CD4-positive, alpha-beta memory T cell (primary cell): ENCODE measurements at regions of chr14 and their contacts with region 1.

Region 1: DNA sequence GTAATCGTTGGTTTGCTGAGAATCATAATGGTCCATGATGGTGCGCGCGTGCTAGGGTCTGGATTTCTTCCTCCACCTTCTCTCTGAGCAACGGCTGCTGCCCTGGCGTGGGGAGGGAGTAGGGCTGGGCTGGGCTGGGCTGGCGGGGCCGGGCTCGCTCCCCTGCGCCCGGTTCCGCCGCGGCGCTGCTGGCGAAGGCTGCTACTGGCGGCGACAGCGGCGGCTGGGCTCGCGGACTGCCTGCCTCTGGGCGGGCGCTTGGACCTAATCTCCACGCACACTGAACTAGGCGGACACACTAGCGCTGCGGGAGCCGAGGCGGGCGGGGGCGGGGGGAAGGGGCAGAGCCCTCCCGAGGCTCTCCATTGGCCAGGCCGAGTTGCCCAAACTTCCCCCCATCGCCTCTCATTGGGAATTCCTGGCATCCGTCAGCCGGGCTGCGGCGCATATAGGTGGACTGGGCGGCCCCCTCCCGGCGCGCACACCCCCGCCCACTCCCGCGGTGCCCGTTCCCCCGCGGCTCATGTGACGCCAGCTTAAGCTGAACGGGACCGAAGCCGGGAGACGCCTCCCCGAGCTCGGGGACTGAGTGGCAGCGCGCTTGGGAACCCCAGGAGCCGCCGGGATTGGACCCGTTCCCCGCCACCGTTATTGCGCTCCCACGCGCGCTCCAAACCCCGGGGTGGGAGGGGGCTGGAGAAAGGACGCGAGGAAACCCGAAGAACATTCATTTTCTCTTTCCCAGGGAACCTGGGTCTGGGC is at the start of gene ACTN1:
- DNase-seq: peak; percentile 46 to 66 (median 50)
- H3K4me3 ChIP-seq: peak within 1 kb of the TSS; percentile 52 to 77
- H3K4me3 Mint-ChIP-seq: peak within 1 kb of the TSS; percentile 92 to 95 (median 94)
- H3K27ac ChIP-seq: peak within 1 kb of the TSS; percentile 42
- H3K27ac Mint-ChIP-seq: peak within 1 kb of the TSS; percentile 75 to 94 (median 89)
- H3K4me1 ChIP-seq: peaks cover 27% of the 10 kb centered on the region
- H3K4me1 Mint-ChIP-seq: peaks cover 27 to 41% (median 35%) of the 10 kb centered on the region in 4 donors
- H3K27me3 ChIP-seq: no peaks in the 10 kb centered on the region
- H3K27me3 Mint-ChIP-seq: no peaks in the 10 kb centered on the region
- total RNA-seq, gene ACTN1: 70.8 to 75.1 TPM

Region 2: GRCh38 chr14:68939893-68940613 is 39.1 kb before region 1 on chr14:
- CTCF ChIA-PET with region 1: interaction called, 6 read pairs
- POLR2A ChIA-PET with region 1: interaction called, 4 read pairs
- intact Hi-C with region 1: loop called (anchors 2 kb)
- DNase-seq: no peak
- H3K4me3 ChIP-seq: no peak overlapping the region
- H3K4me3 Mint-ChIP-seq: no peak overlapping the region
- H3K27ac ChIP-seq: no peak overlapping the region
- H3K27ac Mint-ChIP-seq: peak overlapping the region in 2 of 7 donors; percentile 8 to 14
- H3K4me1 ChIP-seq: peaks cover 27% of the 10 kb centered on the region
- H3K4me1 Mint-ChIP-seq: peaks cover 8 to 51% (median 29%) of the 10 kb centered on the region in 4 donors
- H3K27me3 ChIP-seq: no peaks in the 10 kb centered on the region
- H3K27me3 Mint-ChIP-seq: no peaks in the 10 kb centered on the region

Region 3: DNA sequence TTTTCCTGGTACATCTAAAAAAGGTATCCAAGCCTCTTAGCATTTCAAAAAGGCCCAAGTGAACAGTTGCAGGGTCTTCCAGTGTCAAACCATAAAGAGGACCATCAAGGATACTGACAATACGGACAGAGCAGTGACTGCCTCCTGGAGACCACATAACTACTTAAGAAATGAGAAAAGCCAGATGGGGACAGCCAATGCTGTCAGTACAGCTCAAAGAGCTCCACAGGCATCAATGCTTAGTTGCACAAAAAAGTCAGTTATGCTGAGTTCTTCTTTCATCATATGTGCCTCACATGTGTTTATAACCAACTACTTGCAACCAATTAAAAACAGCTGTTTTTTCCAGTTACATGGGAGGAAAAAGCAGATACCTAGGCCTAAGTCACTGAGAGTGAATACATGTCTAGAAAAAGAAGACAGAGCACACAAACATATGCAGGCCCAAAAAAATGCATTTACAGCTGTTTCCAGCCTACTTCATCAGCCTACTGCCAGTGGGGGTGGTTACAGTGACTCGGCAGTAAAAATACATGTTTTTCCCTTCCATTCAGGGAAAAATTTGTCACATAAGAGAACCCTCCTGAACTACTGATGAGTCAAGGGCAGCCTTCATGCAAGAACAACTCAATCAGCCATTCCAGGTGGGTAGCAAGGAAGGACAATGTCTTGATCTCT is 89.7 kb after region 1 on chr14:
- CTCF ChIA-PET with region 1: no interaction called
- POLR2A ChIA-PET with region 1: no interaction called
- intact Hi-C with region 1: no loop called
- DNase-seq: no peak
- H3K4me3 ChIP-seq: no peak overlapping the region
- H3K4me3 Mint-ChIP-seq: no peak overlapping the region
- H3K27ac ChIP-seq: no peak overlapping the region
- H3K27ac Mint-ChIP-seq: peak overlapping the region in 3 of 7 donors; percentile 13 to 36 (median 36)
- H3K4me1 ChIP-seq: no peaks in the 10 kb centered on the region
- H3K4me1 Mint-ChIP-seq: peaks cover 0 to 3% (median 0%) of the 10 kb centered on the region in 4 donors
- H3K27me3 ChIP-seq: no peaks in the 10 kb centered on the region
- H3K27me3 Mint-ChIP-seq: no peaks in the 10 kb centered on the region

Region 4: GRCh38 chr14:69090187-69090789 is 111.1 kb after region 1 on chr14:
- CTCF ChIA-PET with region 1: no interaction called
- POLR2A ChIA-PET with region 1: interaction called, 3 read pairs
- intact Hi-C with region 1: loop called (anchors 1 kb)
- DNase-seq: peak in 4 of 5 donors; percentile 22 to 32 (median 27)
- H3K4me3 ChIP-seq: no peak overlapping the region
- H3K4me3 Mint-ChIP-seq: no peak overlapping the region
- H3K27ac ChIP-seq: no peak overlapping the region
- H3K27ac Mint-ChIP-seq: no peak overlapping the region
- H3K4me1 ChIP-seq: no peaks in the 10 kb centered on the region
- H3K4me1 Mint-ChIP-seq: peaks cover 4 to 10% (median 6%) of the 10 kb centered on the region in 4 donors
- H3K27me3 ChIP-seq: no peaks in the 10 kb centered on the region
- H3K27me3 Mint-ChIP-seq: no peaks in the 10 kb centered on the region